PC-3 (cell line): ENCODE measurements at regions of chr10 and their contacts with region 1.

Region 1: DNA sequence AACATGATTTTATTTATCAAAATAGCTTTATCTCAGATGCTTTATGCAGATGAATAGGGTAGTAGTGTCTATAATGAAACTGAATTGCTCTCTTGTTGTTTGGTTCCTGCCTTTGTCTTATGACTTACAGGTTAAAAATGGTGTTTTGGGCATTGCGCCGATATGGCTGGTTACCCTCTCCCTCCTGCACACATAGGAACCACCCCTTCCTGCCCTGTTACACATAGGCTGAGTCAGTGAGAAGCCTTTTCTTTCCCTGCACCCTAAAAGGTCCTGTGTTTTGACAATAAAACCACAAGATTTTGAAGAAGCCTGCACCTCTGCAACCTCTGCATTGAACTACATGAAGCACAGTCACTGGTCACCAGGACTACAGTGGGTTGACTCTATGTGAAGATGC is 655.8 kb upstream of the ANKRD30A start:
- DNase-seq: peak; percentile 96
- ATAC-seq: peak; percentile 79
- H3K4me3 ChIP-seq: no peak overlapping the region
- H3K27ac ChIP-seq: peak overlapping the region; percentile 58
- H3K4me1 ChIP-seq: peaks cover 39% of the 10 kb centered on the region
- H3K27me3 ChIP-seq: no peaks in the 10 kb centered on the region
- CTCF ChIP-seq: no peak

Region 2: GRCh38 chr10:36278176-36278575 is 191.4 kb before region 1 on chr10:
- CTCF ChIA-PET with region 1: no interaction called
- POLR2A ChIA-PET with region 1: no interaction called
- intact Hi-C with region 1: loop called (anchors 5 kb)
- DNase-seq: no peak
- ATAC-seq: no peak
- H3K4me3 ChIP-seq: no peak overlapping the region
- H3K27ac ChIP-seq: no peak overlapping the region
- H3K4me1 ChIP-seq: no peaks in the 10 kb centered on the region
- H3K27me3 ChIP-seq: no peaks in the 10 kb centered on the region
- CTCF ChIP-seq: no peak